Mammary epithelial cell (primary cell): ENCODE measurements at regions of chr1 and their contacts with region 1.

Region 1: GRCh38 chr1:209827384-209828262 is at the start of gene UTP25:
- DNase-seq: peak; percentile 95
- H3K4me3 ChIP-seq: peak within 1 kb of the TSS; percentile 75 to 77 (median 76)
- H3K27ac ChIP-seq: peak within 1 kb of the TSS; percentile 100
- H3K4me1 ChIP-seq: peaks cover 56% of the 10 kb centered on the region
- H3K27me3 ChIP-seq: no peaks in the 10 kb centered on the region
- CTCF ChIP-seq: peak; percentile 77 to 79
- total RNA-seq, gene UTP25: 9.3 to 14.0 TPM

Region 2: GRCh38 chr1:209455145-209455544 is 372.5 kb before region 1 on chr1:
- CTCF ChIA-PET with region 1: no interaction called
- dilution Hi-C with region 1: no loop called
- in situ Hi-C with region 1: no loop called
- intact Hi-C with region 1: no loop called
- DNase-seq: peak; percentile 35
- H3K4me3 ChIP-seq: no peak overlapping the region
- H3K27ac ChIP-seq: no peak overlapping the region
- H3K4me1 ChIP-seq: peaks cover 5% of the 10 kb centered on the region
- H3K27me3 ChIP-seq: no peaks in the 10 kb centered on the region
- CTCF ChIP-seq: no peak

Region 3: GRCh38 chr1:209747580-209748262 is 79.9 kb before region 1 on chr1:
- CTCF ChIA-PET with region 1: no interaction called
- dilution Hi-C with region 1: no loop called
- in situ Hi-C with region 1: no loop called
- intact Hi-C with region 1: loop called (anchors 1 kb)
- DNase-seq: peak; percentile 97
- H3K4me3 ChIP-seq: no peak overlapping the region
- H3K27ac ChIP-seq: no peak overlapping the region
- H3K4me1 ChIP-seq: peaks cover 7% of the 10 kb centered on the region
- H3K27me3 ChIP-seq: no peaks in the 10 kb centered on the region
- CTCF ChIP-seq: peak; percentile 69 to 74

Region 4: DNA sequence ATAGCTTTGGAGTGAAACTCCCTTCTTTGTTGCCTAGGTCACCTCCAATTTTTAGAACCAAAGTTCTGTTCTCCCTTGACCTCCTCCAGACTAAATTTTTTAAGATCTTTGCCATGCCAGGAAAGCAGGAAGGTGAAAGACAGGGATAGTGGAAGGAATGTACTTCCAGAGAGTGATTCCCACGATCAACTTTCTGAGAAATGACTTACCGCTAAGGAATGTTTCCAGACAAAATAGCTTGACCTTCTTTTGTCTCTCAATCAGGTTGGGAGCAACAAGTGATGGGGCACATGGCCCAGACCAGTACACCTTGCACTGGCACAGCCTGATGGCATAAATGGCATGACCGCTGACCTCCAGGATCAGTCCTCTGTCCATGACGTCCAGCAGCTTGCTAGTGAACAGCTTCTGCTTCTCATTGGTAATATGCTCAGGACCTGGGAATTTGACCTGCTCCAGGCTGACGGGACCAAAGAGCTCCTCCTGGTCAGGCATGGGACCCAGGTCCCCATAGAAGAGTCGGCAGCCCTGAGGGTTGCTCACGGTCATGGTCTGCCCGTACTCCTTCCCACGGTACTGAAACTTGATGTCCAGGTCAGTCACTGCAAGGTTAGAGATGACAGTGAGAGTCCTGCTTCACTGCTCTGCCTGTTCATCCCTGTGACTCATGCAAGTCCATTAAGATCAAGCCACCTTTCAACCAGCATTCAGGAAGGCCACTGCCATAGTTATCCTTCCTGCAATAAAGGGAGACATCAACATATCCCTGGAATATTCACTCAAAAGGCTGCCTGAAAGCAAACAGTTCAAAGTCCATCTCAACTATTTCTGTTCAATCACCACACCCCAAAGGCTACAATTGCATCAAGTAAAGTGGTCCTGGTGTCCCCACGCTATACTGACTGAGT is 37.1 kb before region 1 on chr1:
- CTCF ChIA-PET with region 1: no interaction called
- dilution Hi-C with region 1: no loop called
- in situ Hi-C with region 1: no loop called
- intact Hi-C with region 1: loop called (anchors 5 kb)
- DNase-seq: no peak
- H3K4me3 ChIP-seq: no peak overlapping the region
- H3K27ac ChIP-seq: no peak overlapping the region
- H3K4me1 ChIP-seq: peaks cover 30% of the 10 kb centered on the region
- H3K27me3 ChIP-seq: no peaks in the 10 kb centered on the region
- CTCF ChIP-seq: no peak

Region 5: GRCh38 chr1:209805875-209806760 is 21.5 kb before region 1 on chr1 and contains the start of gene IRF6:
- CTCF ChIA-PET with region 1: interaction called, 17 read pairs
- dilution Hi-C with region 1: no loop called
- in situ Hi-C with region 1: no loop called
- intact Hi-C with region 1: loop called (anchors 1 kb)
- DNase-seq: peak; percentile 99
- H3K4me3 ChIP-seq: peak within 1 kb of the TSS; percentile 68 to 96 (median 77)
- H3K27ac ChIP-seq: peak within 1 kb of the TSS; percentile 99
- H3K4me1 ChIP-seq: peaks cover 63% of the 10 kb centered on the region
- H3K27me3 ChIP-seq: no peaks in the 10 kb centered on the region
- CTCF ChIP-seq: no peak
- total RNA-seq, gene IRF6: 261 to 422 TPM

Region 6: GRCh38 chr1:209815931-209816341 is 11.7 kb before region 1 on chr1:
- CTCF ChIA-PET with region 1: no interaction called
- dilution Hi-C with region 1: no loop called
- in situ Hi-C with region 1: no loop called
- intact Hi-C with region 1: loop called (anchors 1 kb)
- DNase-seq: peak; percentile 100
- H3K4me3 ChIP-seq: peak overlapping the region in 1 of 3 experiments; percentile 35
- H3K27ac ChIP-seq: peak overlapping the region; percentile 97
- H3K4me1 ChIP-seq: peaks cover 25% of the 10 kb centered on the region
- H3K27me3 ChIP-seq: no peaks in the 10 kb centered on the region
- CTCF ChIP-seq: no peak

Region 7: DNA sequence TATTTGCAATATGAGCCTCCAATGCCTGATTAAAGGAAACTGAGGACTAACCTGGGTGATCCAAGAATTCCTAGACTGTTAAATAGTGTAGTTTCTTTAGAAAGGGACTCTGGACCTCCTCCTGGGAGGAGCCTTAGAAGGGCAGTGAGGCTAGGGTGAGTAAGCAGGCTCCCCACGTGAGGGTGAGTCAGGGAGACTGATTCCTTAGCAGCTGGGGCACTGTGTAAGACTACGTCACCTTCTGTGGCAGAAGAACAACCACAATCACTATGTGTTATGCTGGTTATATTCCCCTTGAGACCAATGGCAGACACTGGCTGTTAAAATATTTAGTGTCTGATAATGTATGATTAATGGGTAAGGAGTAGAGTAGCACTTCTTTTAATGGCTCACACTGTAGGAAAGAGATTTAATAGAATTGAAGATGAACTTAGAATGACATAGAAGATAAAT is 57.1 kb after region 1 on chr1:
- CTCF ChIA-PET with region 1: interaction called, 19 read pairs
- dilution Hi-C with region 1: no loop called
- in situ Hi-C with region 1: no loop called
- intact Hi-C with region 1: no loop called
- DNase-seq: peak; percentile 99
- H3K4me3 ChIP-seq: no peak overlapping the region
- H3K27ac ChIP-seq: peak overlapping the region; percentile 96
- H3K4me1 ChIP-seq: peaks cover 39% of the 10 kb centered on the region
- H3K27me3 ChIP-seq: no peaks in the 10 kb centered on the region
- CTCF ChIP-seq: no peak

Region 8: DNA sequence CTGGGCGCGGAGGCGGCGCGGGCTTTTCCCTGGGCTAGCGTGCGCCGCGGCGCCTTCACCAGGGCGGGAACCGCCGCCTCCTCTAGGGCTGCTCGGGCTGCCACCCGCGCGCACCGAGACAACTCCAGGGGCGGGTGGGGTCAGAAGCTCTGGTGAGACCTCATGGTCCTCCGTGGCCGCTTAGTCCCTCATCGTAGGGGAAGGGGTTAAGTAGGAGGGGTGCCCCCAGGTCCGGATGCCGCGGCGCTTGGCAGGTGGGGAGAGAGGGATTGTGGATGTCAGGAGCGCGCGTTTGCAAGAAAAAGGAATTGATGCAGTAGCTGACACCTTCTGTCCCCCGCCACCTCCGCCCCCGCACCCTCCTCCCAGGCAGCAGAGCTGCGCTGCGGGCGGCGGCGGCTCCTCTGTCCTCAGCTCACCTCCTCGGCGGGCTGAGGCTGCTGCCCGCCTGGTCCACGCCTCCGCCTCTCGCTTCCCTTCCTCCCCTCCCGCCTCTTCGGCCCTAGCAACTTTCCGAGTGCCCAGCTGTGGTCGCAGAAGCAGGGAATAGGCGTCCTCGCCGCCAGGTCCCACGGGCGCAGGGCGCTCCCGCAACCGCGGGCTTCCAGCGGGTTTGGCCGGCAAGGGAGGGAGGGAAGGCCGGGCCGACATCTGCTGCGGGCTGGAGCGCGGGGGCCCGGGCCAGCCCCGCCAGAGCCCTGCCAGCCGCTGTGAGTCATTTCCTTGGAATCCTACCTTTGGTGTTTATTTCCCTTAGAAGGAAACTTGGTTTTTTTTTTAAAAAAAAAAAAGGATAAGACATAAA is 405.8 kb after region 1 on chr1:
- CTCF ChIA-PET with region 1: no interaction called
- dilution Hi-C with region 1: loop called (anchors 25 kb)
- in situ Hi-C with region 1: no loop called
- intact Hi-C with region 1: no loop called
- DNase-seq: peak; percentile 80
- H3K4me3 ChIP-seq: peak overlapping the region; percentile 60 to 82 (median 78)
- H3K27ac ChIP-seq: peak overlapping the region; percentile 42
- H3K4me1 ChIP-seq: peaks cover 9% of the 10 kb centered on the region
- H3K27me3 ChIP-seq: no peaks in the 10 kb centered on the region
- CTCF ChIP-seq: no peak